ENCODE measurements at regions of chr14 and their contacts with region 1.

Region 1: DNA sequence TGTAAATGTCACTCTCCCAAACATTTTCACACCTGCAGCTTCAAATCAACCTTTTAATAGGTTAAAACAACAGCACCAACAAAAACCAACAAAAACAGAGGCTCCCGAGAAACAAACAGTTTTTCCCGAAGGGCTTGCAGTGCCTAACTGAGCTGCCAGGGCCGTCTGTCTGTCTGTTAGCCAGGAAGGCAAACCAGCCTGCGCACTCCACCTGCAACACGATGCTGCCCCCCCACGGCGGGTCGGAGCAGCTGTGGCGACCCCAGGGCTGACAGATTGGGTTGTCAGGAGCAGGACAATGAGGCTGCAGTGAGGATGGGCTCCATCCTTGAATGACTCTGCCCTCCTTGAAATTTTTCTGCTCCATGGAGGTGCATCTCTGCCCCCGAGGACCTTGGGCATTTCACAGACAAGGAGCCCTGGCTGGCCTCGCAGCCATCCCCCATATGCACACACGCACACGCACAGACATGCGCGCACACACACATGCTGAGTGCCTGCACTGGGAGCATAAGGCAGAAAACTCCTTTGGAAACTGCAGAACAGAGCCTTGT is 2.6 kb downstream of the RTL1 start:
- DNase-seq: peak; percentile 72
- ATAC-seq: peak; percentile 79
- H3K4me3 ChIP-seq: peak overlapping the region; percentile 8 to 53 (median 10); a peak in 4 of 6 replicates
- H3K27ac ChIP-seq: peak overlapping the region; percentile 58
- H3K4me1 ChIP-seq: peaks cover 54% of the 10 kb centered on the region
- H3K27me3 ChIP-seq: peaks cover 0 to 22% of the 10 kb centered on the region in 2 experiments; a peak in 2 of 5 replicates
- CTCF ChIP-seq: peak; percentile 97
- EP300 ChIP-seq: no peak
- POLR2A ChIP-seq: no peak
- RAD21 ChIP-seq: peak; percentile 96

Region 2: DNA sequence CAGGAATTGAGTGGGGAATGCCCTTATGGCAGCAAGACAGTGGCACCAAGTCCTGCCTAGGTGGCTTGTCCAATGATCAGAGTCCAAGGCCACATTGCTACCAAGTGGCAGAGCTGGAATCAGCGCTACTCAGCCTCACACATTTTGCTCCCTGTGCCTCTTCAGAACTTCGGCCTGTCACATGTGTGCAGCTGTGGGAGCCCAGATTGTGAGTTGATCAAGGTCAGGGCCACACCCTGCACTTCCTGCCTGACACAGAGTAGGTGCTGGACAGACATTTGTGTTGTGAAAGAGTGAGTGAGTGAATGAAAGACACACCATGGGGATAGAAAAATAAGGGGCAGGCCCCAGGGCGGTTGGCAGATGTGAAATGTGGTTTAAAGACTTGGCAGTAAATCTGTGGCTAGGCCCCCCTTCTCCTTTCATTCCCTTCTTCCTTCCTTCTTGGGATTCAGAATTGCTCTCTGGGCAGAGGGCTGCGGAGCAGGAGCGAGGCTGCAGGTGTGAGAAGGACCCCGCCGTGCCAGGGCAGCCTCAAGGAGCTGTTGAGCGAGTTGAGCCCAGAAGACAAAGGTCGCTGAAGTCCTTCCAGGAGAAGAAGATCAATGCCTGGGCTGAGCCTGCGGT is 494.3 kb before region 1 on chr14:
- CTCF ChIA-PET with region 1: no interaction called
- POLR2A ChIA-PET with region 1: no interaction called
- in situ Hi-C with region 1: loop called (anchors 10 kb)
- intact Hi-C with region 1: no loop called
- DNase-seq: peak; percentile 66
- ATAC-seq: peak; percentile 82
- H3K4me3 ChIP-seq: 0 out of 6 replicates have a peak overlapping the region, but pooled peaks of 1 of the 3 experiments have one; percentile 5
- H3K27ac ChIP-seq: no peak overlapping the region
- H3K4me1 ChIP-seq: peaks cover 38% of the 10 kb centered on the region
- H3K27me3 ChIP-seq: no peaks in the 10 kb centered on the region; a peak in 1 of 5 replicates
- CTCF ChIP-seq: no peak
- EP300 ChIP-seq: no peak
- POLR2A ChIP-seq: no peak
- RAD21 ChIP-seq: no peak

Region 3: GRCh38 chr14:100709289-100710284 is 191.3 kb before region 1 on chr14:
- CTCF ChIA-PET with region 1: interaction called, 3 read pairs
- POLR2A ChIA-PET with region 1: no interaction called
- in situ Hi-C with region 1: no loop called
- intact Hi-C with region 1: loop called (anchors 2 kb)
- DNase-seq: no peak
- ATAC-seq: no peak
- H3K4me3 ChIP-seq: no peak overlapping the region
- H3K27ac ChIP-seq: no peak overlapping the region
- H3K4me1 ChIP-seq: peaks cover 58% of the 10 kb centered on the region
- H3K27me3 ChIP-seq: peaks cover 0 to 5% of the 10 kb centered on the region in 2 experiments; a peak in 2 of 5 replicates
- CTCF ChIP-seq: no peak
- EP300 ChIP-seq: no peak
- POLR2A ChIP-seq: no peak
- RAD21 ChIP-seq: no peak

Region 4: DNA sequence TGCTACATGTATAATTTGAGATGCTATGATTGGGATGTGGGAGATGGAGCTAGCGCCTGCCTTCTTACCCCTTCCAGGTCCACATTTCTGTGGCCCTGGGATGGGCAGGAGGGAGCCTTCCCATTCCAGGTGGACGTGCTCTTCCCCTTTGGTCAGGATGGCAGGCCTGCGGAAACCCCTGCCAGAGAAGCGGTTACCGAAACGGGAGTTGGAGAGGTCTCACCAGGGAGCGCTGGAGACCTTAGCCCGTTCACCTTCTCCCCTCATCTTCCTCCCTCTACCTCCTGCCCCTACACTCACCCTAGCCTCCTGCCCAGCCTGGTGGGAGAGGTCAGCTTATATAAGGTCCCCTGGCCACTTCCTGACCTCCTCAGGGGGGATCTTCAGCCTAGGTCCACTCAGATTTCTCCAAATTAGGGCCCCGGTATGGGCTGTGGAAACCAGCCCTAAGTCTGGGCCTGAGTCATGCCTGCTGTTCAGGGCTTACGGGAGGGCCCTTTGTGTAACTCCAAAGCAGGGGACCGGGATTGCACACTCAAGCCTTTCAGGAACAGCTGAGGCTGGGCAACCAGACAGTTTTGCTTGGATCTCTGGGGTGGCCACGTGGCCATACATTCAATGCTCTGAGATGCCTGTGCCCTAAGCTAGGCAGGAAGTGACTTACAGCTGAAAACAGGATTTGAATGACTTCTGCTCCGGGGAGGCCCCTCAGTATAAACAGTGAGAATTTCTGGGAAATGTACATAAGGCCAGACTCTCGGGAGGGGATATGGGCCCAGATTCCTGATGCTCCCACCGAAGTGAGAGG is 85.2 kb before region 1 on chr14:
- CTCF ChIA-PET with region 1: no interaction called
- POLR2A ChIA-PET with region 1: interaction called, 15 read pairs
- in situ Hi-C with region 1: no loop called
- intact Hi-C with region 1: no loop called
- DNase-seq: peak; percentile 91
- ATAC-seq: peak; percentile 45
- H3K4me3 ChIP-seq: peak overlapping the region in 1 of 3 experiments; percentile 7; a peak in 1 of 6 replicates
- H3K27ac ChIP-seq: peak overlapping the region; percentile 100
- H3K4me1 ChIP-seq: peaks cover 69% of the 10 kb centered on the region
- H3K27me3 ChIP-seq: no peaks in the 10 kb centered on the region
- CTCF ChIP-seq: 0 out of 2 replicates have a peak, but pooled peaks have one; percentile 19
- EP300 ChIP-seq: peak in 1 of 2 experiments; percentile 89; a peak in 2 of 4 replicates
- POLR2A ChIP-seq: no peak; a peak in 1 of 4 replicates
- RAD21 ChIP-seq: no peak

Region 5: DNA sequence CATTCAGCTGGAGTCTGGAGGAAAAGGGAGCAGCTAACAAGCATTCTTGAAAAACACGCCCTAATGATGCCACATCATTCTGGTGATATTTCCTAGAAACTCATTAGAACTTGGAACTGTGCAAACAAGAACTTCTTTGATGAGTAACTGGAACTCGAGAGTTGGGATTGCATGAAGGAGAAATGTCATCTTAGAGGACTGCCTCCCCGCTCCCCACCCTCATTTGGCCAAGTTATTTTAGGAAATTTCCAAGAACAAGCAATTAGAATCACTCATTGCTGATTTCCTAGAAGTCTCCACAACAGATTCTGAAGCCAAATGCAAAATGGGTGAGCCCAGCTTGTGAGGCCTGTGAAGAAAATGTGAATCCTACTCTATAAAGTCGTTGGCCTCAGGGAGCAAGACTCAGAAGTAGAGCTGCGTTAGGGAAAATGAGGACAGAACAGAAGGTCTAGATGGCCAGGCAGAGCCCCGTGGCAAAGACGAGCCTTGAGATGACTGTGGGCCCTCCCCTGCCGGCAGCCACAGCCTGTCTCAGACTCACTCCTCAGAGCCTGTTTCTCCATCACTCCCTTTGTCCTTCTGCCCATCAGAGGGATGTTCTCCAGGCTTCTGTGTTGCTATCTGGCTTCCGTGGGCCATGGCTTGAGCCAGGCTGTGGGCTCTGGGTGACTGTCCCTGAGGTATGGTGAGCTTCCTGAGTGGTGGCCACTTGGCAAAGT is 35.8 kb before region 1 on chr14:
- CTCF ChIA-PET with region 1: no interaction called
- POLR2A ChIA-PET with region 1: no interaction called
- in situ Hi-C with region 1: loop called (anchors 5 kb)
- intact Hi-C with region 1: no loop called
- DNase-seq: no peak
- ATAC-seq: no peak
- H3K4me3 ChIP-seq: no peak overlapping the region
- H3K27ac ChIP-seq: no peak overlapping the region
- H3K4me1 ChIP-seq: peaks cover 6% of the 10 kb centered on the region
- H3K27me3 ChIP-seq: peaks cover 11 to 63% of the 10 kb centered on the region in 2 experiments
- CTCF ChIP-seq: no peak
- EP300 ChIP-seq: no peak
- POLR2A ChIP-seq: no peak
- RAD21 ChIP-seq: no peak

Region 6: DNA sequence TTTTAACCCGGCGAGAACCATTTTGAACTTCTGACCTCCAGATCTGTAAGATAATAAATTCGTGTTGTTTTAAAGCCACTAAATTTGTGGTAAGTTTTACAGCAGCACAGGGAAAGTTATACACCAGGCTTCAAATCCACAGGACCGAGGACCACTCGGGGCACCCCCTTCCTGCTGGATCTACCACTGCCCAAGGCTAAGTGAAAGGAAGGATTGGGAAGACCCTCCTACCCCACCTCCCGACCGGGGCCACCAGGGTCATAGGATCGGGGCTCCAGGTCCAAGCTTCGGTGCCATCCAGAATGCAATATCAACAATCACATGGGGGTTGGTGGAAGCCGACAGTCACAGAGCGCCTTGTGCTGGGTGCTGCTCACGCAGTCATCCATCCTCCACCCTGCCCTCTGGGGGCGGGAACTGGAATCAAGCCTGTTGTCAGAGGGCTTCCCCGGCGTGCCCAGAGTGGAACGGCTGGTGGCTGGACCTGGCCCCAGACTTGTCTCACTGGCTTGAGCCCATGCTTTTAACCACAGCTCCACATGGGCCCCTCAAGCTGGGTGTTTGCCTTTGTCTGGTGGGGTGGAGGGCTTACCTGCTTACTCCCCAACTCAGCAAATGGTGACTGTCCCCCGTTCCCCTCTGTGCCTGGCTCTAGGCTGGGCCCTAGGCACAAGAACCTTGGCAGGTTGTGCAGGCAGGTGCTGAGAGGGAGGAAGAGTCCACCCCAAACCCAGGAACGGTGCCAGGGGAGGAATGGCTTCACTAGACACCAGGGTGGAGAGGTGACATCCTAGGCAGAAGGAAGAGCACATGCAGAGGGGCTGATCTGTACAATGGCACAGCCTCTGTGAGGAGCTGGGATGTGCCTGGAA is 182.9 kb after region 1 on chr14:
- CTCF ChIA-PET with region 1: interaction called, 6 read pairs
- POLR2A ChIA-PET with region 1: no interaction called
- in situ Hi-C with region 1: no loop called
- intact Hi-C with region 1: loop called (anchors 5 kb)
- DNase-seq: peak; percentile 20
- ATAC-seq: peak; percentile 97
- H3K4me3 ChIP-seq: no peak overlapping the region
- H3K27ac ChIP-seq: no peak overlapping the region
- H3K4me1 ChIP-seq: no peaks in the 10 kb centered on the region
- H3K27me3 ChIP-seq: peaks cover 2 to 39% of the 10 kb centered on the region in 2 experiments; a peak in 3 of 5 replicates
- CTCF ChIP-seq: peak; percentile 63
- EP300 ChIP-seq: no peak
- POLR2A ChIP-seq: no peak
- RAD21 ChIP-seq: peak; percentile 38; the same call in 1 of the 2 replicates

Region 7: GRCh38 chr14:101628471-101628966 is 727.6 kb after region 1 on chr14:
- CTCF ChIA-PET with region 1: interaction called, 9 read pairs
- POLR2A ChIA-PET with region 1: no interaction called
- in situ Hi-C with region 1: no loop called
- intact Hi-C with region 1: loop called (anchors 1 kb)
- DNase-seq: peak; percentile 25
- ATAC-seq: peak; percentile 84
- H3K4me3 ChIP-seq: peak overlapping the region in 2 of 3 experiments; percentile 34 to 59; a peak in 3 of 6 replicates
- H3K27ac ChIP-seq: no peak overlapping the region
- H3K4me1 ChIP-seq: peaks cover 15% of the 10 kb centered on the region
- H3K27me3 ChIP-seq: peaks cover 1 to 21% of the 10 kb centered on the region in 2 experiments; a peak in 3 of 5 replicates
- CTCF ChIP-seq: peak; percentile 96
- EP300 ChIP-seq: no peak
- POLR2A ChIP-seq: no peak
- RAD21 ChIP-seq: peak; percentile 97